CD4-positive, alpha-beta T cell (primary cell): ENCODE measurements at regions of chr11 and their contacts with region 1.

Region 1: DNA sequence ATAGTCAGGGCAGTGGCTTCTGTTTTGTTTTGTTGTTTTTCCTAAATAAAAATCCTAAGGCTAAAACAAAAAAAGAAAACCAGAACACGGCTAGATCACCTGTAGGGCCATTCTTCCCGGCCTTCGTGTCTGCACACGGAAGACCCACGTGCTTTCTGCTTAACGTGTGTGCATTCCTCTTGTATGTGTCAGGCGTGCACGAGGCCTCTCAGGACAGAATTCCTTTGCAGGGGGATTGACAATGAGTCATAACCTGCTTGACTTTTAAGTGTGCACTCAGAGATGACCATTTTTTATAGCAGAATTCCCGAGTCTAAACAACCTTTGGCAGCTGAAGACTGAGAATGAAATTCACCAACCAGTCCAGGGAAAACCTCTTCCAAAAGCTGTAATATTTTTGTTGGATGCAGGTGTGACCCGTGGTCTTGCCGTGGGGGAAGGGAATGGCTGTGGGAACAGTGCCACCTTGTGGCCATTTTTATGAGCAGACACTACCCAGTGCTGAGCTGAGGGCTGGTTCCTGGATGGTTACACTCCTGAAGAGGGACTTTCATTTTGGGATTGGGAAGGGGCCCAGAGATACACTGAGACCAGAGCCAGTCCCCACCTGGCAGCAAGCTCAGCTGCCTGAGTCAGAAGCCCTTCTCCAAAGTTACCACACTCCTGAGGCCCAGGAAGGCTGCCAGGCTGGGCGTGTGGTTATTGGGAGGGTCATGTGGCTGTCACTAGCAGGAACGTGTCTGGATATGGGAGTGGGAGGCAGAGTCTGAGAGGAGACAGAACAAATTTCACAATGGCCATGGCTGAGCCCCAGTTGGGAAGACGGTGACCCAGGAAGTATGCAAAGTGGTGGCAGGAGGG is 35.8 kb upstream of the DKK3 start:
- DNase-seq: peak; percentile 31 to 81 (median 48)
- ATAC-seq: peak; percentile 64
- H3K4me3 ChIP-seq: no peak overlapping the region
- H3K4me3 Mint-ChIP-seq: no peak overlapping the region
- H3K27ac ChIP-seq: no peak overlapping the region
- H3K27ac Mint-ChIP-seq: no peak overlapping the region
- H3K4me1 ChIP-seq: peaks cover 8% of the 10 kb centered on the region
- H3K4me1 Mint-ChIP-seq: peaks cover 4% of the 10 kb centered on the region
- H3K27me3 ChIP-seq: no peaks in the 10 kb centered on the region
- H3K27me3 Mint-ChIP-seq: no peaks in the 10 kb centered on the region
- CTCF ChIP-seq: peak; percentile 98

Region 2: GRCh38 chr11:10933455-10934292 is 1110.5 kb before region 1 on chr11:
- CTCF ChIA-PET with region 1: interaction called, 3 read pairs
- POLR2A ChIA-PET with region 1: no interaction called
- intact Hi-C with region 1: loop called in 1 of 2 experiments (anchors 5 kb)
- DNase-seq: peak; percentile 67 to 90 (median 80)
- ATAC-seq: peak; percentile 89
- H3K4me3 ChIP-seq: peak overlapping the region; percentile 56
- H3K4me3 Mint-ChIP-seq: peak overlapping the region; percentile 90
- H3K27ac ChIP-seq: no peak overlapping the region
- H3K27ac Mint-ChIP-seq: peak overlapping the region; percentile 52
- H3K4me1 ChIP-seq: peaks cover 24% of the 10 kb centered on the region
- H3K4me1 Mint-ChIP-seq: peaks cover 24% of the 10 kb centered on the region
- H3K27me3 ChIP-seq: peaks cover 25 to 31% of the 10 kb centered on the region in 2 experiments
- H3K27me3 Mint-ChIP-seq: peaks cover 49% of the 10 kb centered on the region
- CTCF ChIP-seq: peak; percentile 94

Region 3: DNA sequence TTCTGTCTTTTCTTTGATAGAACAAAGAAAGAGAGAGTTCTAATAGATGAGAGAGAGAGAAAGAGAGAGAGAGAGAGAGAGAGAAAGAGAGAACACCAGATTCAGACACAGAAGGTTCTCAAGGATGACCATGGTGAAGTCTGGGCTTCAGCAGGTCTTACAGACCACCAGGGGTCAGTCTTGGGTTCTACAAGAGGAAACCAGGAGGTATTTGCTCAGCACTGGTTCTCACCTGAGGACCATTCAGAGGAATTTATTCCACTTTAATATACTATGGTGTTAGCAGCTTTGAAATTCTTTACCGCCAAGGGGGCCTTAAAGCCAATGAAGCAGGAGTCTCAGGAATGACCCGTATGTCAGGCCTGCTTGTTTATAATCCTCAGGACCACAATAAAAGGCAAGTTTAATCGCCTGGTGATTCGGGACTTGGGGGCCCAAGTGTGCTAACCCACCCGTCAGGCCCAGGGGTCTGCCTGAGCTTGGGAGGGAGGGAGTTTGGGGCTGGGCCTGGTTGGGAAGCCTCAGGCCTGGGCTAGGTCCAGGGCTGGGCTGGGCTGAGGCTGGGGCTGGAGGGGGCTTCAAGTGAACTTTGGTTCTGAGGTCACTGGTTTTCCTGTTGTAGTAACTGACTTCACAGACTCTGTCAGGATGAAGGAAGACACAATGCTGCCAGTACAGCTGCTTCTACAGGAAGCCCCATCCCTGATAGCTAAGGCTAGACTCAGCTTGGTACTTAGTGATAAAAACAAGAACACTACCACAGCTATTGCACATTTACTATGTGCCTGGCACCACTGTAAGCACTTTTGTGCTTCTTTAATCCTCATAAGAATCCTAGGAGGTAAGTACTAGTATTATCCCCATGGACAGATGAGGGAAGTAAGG is 1007.1 kb before region 1 on chr11:
- CTCF ChIA-PET with region 1: no interaction called
- POLR2A ChIA-PET with region 1: no interaction called
- intact Hi-C with region 1: loop called in 1 of 2 experiments (anchors 10 kb)
- DNase-seq: peak in 8 of 14 experiments; percentile 11 to 86 (median 35)
- ATAC-seq: peak; percentile 93
- H3K4me3 ChIP-seq: no peak overlapping the region
- H3K4me3 Mint-ChIP-seq: no peak overlapping the region
- H3K27ac ChIP-seq: no peak overlapping the region
- H3K27ac Mint-ChIP-seq: peak overlapping the region; percentile 78
- H3K4me1 ChIP-seq: peaks cover 14% of the 10 kb centered on the region
- H3K4me1 Mint-ChIP-seq: peaks cover 22% of the 10 kb centered on the region
- H3K27me3 ChIP-seq: no peaks in the 10 kb centered on the region
- H3K27me3 Mint-ChIP-seq: no peaks in the 10 kb centered on the region
- CTCF ChIP-seq: peak; percentile 62

Region 4: DNA sequence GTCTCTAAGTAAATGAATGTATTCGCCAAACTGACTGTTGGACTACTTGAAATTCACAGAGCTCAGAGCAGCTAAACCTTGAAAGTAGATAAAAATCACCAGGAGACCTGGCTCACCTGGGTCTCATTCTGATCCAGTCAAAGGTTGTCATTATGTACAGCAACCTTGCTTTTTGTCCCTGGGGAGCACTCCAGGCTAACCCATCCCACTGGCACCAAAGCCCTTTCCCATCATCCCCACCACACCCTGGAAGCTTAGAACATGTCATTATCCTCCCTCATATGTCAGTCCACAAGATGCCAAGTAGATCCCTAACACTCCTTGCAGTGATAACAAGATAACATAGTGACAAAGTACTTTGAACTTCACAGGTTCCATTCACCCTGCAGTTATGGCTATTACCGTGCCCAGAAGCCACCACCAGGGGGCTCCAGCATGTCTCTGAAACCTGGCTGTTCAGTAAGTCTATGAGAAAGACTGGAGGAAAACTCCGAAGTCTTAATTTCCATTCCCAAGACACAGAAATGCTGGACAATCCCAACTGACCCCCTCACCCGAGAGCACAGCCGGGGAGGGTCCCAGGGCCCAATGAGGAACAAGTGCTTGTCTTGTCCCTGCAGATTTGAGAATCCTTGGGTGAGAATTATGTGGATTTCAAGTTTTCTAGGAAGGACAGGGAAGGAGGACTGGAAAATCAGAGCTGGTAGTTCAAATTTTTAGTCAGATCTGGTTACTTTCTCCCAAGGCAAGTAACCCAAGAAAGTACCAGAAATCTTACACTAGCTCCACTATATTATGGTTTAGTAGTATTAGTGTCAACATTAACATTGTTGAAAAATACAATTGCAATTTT is 245.4 kb before region 1 on chr11:
- CTCF ChIA-PET with region 1: no interaction called
- POLR2A ChIA-PET with region 1: no interaction called
- intact Hi-C with region 1: loop called (anchors 1 to 2 kb)
- DNase-seq: peak; percentile 58 to 92 (median 76)
- ATAC-seq: peak; percentile 91
- H3K4me3 ChIP-seq: no peak overlapping the region
- H3K4me3 Mint-ChIP-seq: no peak overlapping the region
- H3K27ac ChIP-seq: no peak overlapping the region
- H3K27ac Mint-ChIP-seq: no peak overlapping the region
- H3K4me1 ChIP-seq: peaks cover 4% of the 10 kb centered on the region
- H3K4me1 Mint-ChIP-seq: no peaks in the 10 kb centered on the region
- H3K27me3 ChIP-seq: peaks cover 4 to 5% of the 10 kb centered on the region in 2 experiments
- H3K27me3 Mint-ChIP-seq: peaks cover 32% of the 10 kb centered on the region
- CTCF ChIP-seq: peak; percentile 94

Region 5: GRCh38 chr11:11876458-11876857 is 167.7 kb before region 1 on chr11:
- CTCF ChIA-PET with region 1: no interaction called
- POLR2A ChIA-PET with region 1: no interaction called
- intact Hi-C with region 1: no loop called
- DNase-seq: peak in 2 of 14 experiments; percentile 20 to 25
- ATAC-seq: no peak
- H3K4me3 ChIP-seq: no peak overlapping the region
- H3K4me3 Mint-ChIP-seq: no peak overlapping the region
- H3K27ac ChIP-seq: no peak overlapping the region
- H3K27ac Mint-ChIP-seq: no peak overlapping the region
- H3K4me1 ChIP-seq: peaks cover 8% of the 10 kb centered on the region
- H3K4me1 Mint-ChIP-seq: peaks cover 80% of the 10 kb centered on the region
- H3K27me3 ChIP-seq: no peaks in the 10 kb centered on the region
- H3K27me3 Mint-ChIP-seq: no peaks in the 10 kb centered on the region
- CTCF ChIP-seq: no peak

Region 6: GRCh38 chr11:11931461-11932055 is 112.6 kb before region 1 on chr11:
- CTCF ChIA-PET with region 1: no interaction called
- POLR2A ChIA-PET with region 1: no interaction called
- intact Hi-C with region 1: loop called (anchors 1 to 2 kb)
- DNase-seq: peak in 4 of 14 experiments; percentile 9 to 58 (median 54)
- ATAC-seq: peak; percentile 71
- H3K4me3 ChIP-seq: no peak overlapping the region
- H3K4me3 Mint-ChIP-seq: no peak overlapping the region
- H3K27ac ChIP-seq: no peak overlapping the region
- H3K27ac Mint-ChIP-seq: no peak overlapping the region
- H3K4me1 ChIP-seq: no peaks in the 10 kb centered on the region
- H3K4me1 Mint-ChIP-seq: peaks cover 3% of the 10 kb centered on the region
- H3K27me3 ChIP-seq: no peaks in the 10 kb centered on the region
- H3K27me3 Mint-ChIP-seq: no peaks in the 10 kb centered on the region
- CTCF ChIP-seq: peak; percentile 79

Region 7: DNA sequence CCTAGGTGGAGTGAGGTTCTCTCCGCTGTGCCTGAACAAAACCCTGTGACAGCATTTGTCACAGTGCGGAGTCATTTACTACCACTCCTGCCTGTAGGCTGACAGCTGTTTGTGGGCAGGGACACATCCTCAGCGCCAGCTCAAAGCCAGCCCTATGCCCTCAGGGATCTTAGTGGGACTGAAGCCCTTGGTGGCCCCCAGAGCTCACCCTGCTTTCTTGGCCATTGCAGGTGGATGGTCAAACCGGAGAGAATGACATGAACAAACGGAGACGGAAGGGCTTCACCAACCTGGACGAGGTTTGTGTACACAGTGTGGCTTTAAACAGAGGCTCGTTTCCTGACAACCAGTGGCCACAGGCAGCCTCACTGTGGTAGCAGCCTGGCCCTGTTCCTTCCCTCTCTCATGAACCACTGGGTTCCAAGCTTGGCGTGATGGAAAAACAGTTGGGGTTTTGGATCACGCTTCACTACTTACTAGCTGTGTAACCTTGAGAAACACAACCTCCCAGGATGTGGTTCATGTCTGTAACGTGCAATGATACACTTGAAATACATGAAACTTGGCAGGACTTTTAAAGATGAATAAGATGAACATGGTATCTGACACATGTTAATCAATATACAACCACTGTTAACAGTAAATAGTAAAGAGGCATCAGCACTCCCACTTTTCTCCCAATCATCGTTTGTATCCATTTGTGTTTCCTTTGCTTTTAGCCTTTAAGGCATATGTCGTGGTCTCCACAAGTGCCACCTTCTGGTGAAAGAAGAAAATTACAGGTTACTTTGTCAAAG is 192.0 kb after region 1 on chr11:
- CTCF ChIA-PET with region 1: interaction called, 10 read pairs
- POLR2A ChIA-PET with region 1: interaction called, 4 read pairs
- intact Hi-C with region 1: loop called (anchors 1 kb)
- DNase-seq: peak in 9 of 14 experiments; percentile 4 to 83 (median 40)
- ATAC-seq: peak; percentile 85
- H3K4me3 ChIP-seq: peak overlapping the region; percentile 7
- H3K4me3 Mint-ChIP-seq: peak overlapping the region; percentile 82
- H3K27ac ChIP-seq: peak overlapping the region in 1 of 2 donors; percentile 59
- H3K27ac Mint-ChIP-seq: peak overlapping the region; percentile 92
- H3K4me1 ChIP-seq: peaks cover 15% of the 10 kb centered on the region
- H3K4me1 Mint-ChIP-seq: peaks cover 30% of the 10 kb centered on the region
- H3K27me3 ChIP-seq: no peaks in the 10 kb centered on the region
- H3K27me3 Mint-ChIP-seq: no peaks in the 10 kb centered on the region
- CTCF ChIP-seq: peak; percentile 92

Region 8: DNA sequence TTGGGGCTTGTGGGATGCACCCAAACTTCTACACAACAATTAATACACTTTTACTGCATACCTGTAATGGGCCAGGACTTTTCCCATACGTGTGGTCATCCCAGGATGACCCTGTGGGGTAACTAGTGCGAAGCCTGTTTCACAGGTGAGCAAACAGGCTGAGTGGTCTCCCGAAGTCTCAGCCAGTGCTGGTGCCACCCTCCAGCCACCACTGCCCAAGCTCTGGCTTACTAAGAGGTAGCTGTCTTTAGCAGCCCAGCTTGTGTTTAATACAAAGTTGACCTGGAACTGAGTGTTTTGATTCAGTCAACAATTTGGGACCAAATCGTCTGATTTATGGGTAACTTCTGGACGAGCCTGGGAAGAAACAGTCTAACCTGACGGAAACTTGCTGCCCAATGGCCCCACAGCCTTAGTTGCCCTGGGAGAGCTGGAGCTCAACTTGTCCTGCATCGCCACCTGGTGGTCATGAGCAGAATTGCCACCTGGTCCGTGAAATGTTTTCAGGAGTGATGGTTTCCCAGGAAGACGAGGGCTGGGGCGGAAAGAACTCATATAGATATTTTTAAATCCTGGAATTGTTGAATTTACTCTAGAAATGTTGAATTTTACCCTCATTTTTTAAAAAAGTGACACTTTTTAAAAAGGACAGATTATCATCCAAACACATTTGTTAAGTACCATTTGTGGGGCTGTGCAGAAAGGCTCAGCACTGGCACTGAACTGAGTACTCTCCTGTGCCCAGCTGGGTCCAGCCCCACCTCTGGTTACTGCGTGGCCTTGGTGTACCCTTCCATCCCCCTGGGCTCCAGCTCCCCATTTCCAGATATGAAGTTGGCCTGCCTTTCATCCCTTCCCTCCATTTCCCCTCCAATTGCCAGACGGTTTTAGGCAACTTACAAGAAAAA is 237.6 kb after region 1 on chr11:
- CTCF ChIA-PET with region 1: interaction called, 34 read pairs
- POLR2A ChIA-PET with region 1: interaction called, 5 read pairs
- intact Hi-C with region 1: loop called (anchors 1 kb)
- DNase-seq: peak; percentile 66 to 86 (median 74)
- ATAC-seq: peak; percentile 65
- H3K4me3 ChIP-seq: no peak overlapping the region
- H3K4me3 Mint-ChIP-seq: no peak overlapping the region
- H3K27ac ChIP-seq: no peak overlapping the region
- H3K27ac Mint-ChIP-seq: no peak overlapping the region
- H3K4me1 ChIP-seq: no peaks in the 10 kb centered on the region
- H3K4me1 Mint-ChIP-seq: no peaks in the 10 kb centered on the region
- H3K27me3 ChIP-seq: no peaks in the 10 kb centered on the region
- H3K27me3 Mint-ChIP-seq: no peaks in the 10 kb centered on the region
- CTCF ChIP-seq: peak; percentile 99

Region 9: DNA sequence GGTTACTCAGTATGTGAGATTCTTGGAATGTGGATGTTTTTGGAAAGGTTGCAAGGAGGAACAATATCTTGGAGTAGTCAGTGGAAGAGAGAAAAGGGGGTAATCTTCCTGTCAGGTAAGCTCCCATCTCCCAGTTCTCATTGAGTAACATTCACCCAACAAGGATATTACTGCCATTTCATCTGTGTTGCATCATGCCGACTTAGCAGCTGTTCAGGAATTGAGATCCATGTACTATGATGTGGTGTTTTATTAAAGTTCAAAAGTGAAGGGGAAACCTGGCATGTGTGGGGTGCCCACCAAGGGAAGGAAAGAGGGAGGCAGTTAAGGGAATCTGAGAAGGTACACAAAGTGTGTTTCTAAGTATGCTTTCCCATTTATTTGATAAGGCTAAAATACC is 906.5 kb after region 1 on chr11:
- CTCF ChIA-PET with region 1: no interaction called
- POLR2A ChIA-PET with region 1: no interaction called
- intact Hi-C with region 1: no loop called
- DNase-seq: no peak
- ATAC-seq: no peak
- H3K4me3 ChIP-seq: no peak overlapping the region
- H3K4me3 Mint-ChIP-seq: no peak overlapping the region
- H3K27ac ChIP-seq: no peak overlapping the region
- H3K27ac Mint-ChIP-seq: no peak overlapping the region
- H3K4me1 ChIP-seq: no peaks in the 10 kb centered on the region
- H3K4me1 Mint-ChIP-seq: no peaks in the 10 kb centered on the region
- H3K27me3 ChIP-seq: peaks cover 6 to 8% of the 10 kb centered on the region in 2 experiments
- H3K27me3 Mint-ChIP-seq: peaks cover 45% of the 10 kb centered on the region
- CTCF ChIP-seq: no peak